ENCODE measurements at regions of chr1 and their contacts with region 1.

Region 1: DNA sequence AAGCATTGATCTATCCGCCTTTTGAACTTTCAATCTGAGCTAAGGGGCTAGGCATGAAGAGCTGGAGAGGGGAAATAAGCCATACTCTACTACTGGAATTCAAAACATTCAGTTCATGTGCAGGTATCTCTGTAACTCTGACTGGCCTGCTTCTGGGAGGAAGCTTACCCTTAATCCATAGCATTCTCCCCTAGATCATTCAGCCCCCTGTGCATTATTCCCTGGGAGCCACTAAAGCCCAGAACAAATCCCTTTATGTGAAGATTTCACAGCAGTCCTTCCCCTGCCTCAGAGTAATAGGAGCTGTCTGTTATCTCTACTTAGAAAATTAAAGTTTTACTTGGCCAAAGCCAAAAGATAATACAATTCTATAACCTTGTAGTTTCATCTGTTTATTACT is 300.7 kb downstream of the SEC16B start:
- DNase-seq: no peak
- H3K4me3 ChIP-seq: no peak overlapping the region
- H3K27ac ChIP-seq: no peak overlapping the region
- H3K4me1 ChIP-seq: no peaks in the 10 kb centered on the region
- H3K27me3 ChIP-seq: no peaks in the 10 kb centered on the region
- CTCF ChIP-seq: no peak
- POLR2A ChIP-seq: no peak

Region 2: GRCh38 chr1:175933801-175934200 is 1735.4 kb before region 1 on chr1:
- intact Hi-C with region 1: loop called (anchors 10 kb)
- DNase-seq: no peak
- H3K4me3 ChIP-seq: no peak overlapping the region
- H3K27ac ChIP-seq: no peak overlapping the region
- H3K4me1 ChIP-seq: no peaks in the 10 kb centered on the region
- H3K27me3 ChIP-seq: no peaks in the 10 kb centered on the region
- CTCF ChIP-seq: no peak
- POLR2A ChIP-seq: no peak